ENCODE measurements at regions of chr1 and their contacts with region 1.

Region 1: DNA sequence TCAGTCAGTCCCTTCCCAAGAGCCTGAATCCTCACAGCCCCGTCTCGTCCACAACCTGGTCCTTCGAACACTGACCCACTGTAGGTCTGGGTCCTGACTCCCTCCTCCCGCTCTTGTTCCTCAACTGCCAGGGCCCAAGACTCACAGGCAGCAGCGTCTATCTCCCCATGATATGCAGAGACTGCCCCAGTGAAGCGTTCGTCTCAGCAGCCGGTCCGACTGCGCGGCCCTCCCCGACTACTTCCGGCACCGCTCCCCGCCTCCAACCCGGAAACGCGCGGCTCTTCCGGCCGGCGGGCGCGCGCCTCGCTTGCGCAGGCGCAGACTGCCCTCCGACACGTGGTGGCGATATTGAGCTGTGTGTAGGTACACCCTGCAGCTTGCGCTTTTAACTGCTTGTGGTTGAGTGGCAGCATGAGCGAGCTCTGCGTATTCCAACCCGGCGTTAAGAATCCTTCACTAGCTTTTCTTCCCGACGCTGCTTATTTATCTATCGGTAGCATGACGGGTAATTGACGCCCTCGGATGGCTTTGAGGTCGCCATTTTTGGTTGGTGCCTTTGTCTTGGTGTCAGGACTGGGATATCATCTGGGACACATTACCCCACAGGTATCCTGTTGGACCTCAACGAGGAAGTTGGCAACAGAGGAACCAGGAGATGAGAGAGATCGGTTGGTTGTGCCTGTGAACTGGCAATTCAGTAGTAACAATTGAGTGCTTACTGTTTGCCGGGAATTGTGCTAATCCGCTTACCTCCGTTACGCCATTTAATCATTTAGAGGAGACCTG is at the start of gene TAF12:
- DNase-seq: peak; percentile 80 to 92 (median 86)
- H3K4me3 ChIP-seq: peak within 1 kb of the TSS; percentile 57 to 98 (median 84)
- H3K27ac ChIP-seq: peak within 1 kb of the TSS; percentile 52 to 95 (median 90)
- H3K27me3 ChIP-seq: no peaks in the 10 kb centered on the region
- CTCF ChIP-seq: peak in 55 of 56 donors; percentile 29 to 87 (median 62)
- total RNA-seq, gene TAF12: 10.2 to 23.1 (median 15.5) TPM

Region 2: DNA sequence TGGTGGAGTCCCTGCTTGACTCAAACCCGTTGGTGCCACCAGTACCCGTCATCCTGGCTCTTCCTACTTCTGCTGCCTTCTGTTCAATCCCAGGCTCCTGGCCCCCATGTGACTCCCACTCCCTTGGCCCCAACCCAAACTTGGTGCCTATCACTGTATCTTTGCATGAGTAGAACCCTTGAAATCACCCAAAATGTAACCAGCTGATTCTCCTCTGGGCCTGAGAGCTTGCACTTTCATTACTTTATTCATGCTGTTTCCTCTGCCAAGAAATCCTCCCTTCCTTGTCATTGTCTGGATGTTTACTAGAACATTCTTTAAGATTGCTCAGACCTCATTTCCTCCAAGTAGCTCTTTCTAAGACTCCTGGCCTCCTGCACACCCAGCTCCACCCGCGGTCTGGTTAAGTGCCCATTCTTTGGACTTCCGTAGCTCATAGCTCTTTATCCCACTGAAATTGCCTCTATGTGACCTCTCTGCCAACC is 482.2 kb before region 1 on chr1:
- intact Hi-C with region 1: no loop called
- DNase-seq: no peak
- H3K4me3 ChIP-seq: no peak overlapping the region
- H3K27ac ChIP-seq: peak overlapping the region in 31 of 59 donors; percentile 0 to 91 (median 37)
- H3K27me3 ChIP-seq: no peaks in the 10 kb centered on the region
- CTCF ChIP-seq: no peak

Region 3: DNA sequence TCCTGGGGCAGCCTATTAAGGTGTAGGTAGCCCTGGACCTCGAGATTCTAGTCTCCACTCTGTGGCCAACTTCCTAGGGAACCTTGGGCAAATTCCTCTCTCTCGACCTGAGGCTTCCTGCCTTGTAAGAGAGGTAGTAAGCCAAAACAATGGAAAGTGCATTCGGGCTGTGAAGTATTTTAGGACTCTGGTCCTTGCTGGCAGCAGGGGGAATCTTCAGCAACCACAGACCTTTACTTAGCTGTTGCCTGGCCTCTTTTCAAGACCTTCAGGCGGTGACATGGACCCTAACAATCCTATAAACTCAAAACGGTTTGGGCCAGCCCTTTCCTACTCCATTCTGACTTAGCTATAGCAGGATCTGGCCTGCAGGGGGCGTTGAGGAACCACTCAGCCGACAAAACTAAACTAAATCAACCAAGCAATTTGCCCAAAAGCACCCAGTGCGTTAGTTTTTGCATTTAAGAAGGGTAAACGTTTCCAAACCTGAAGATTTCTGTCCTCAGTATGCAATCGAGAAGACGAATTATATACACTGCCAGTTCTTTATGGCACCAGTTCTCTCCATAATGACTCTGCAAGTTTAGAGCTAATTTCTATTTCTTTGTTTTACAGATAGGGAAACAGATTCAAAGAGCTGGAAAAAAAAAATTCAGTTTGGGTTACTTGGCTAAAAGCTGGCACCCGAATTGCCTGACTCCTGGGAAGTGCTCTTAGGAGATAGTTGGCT is 394.6 kb before region 1 on chr1:
- intact Hi-C with region 1: loop called in 1 of 2 experiments (anchors 10 kb)
- DNase-seq: peak; percentile 69 to 89 (median 78)
- H3K4me3 ChIP-seq: peak overlapping the region in 51 of 59 donors; percentile 7 to 82 (median 33)
- H3K27ac ChIP-seq: peak overlapping the region; percentile 6 to 96 (median 85)
- H3K27me3 ChIP-seq: no peaks in the 10 kb centered on the region
- CTCF ChIP-seq: peak; percentile 83 to 97 (median 94)

Region 4: GRCh38 chr1:28581536-28582247 is 61.3 kb before region 1 on chr1:
- intact Hi-C with region 1: loop called in 1 of 2 experiments (anchors 5 kb)
- DNase-seq: peak; percentile 94 to 98 (median 97)
- H3K4me3 ChIP-seq: peak overlapping the region; percentile 71 to 100 (median 94)
- H3K27ac ChIP-seq: peak overlapping the region; percentile 14 to 97 (median 86)
- H3K27me3 ChIP-seq: no peaks in the 10 kb centered on the region
- CTCF ChIP-seq: peak in 45 of 56 donors; percentile 8 to 63 (median 38)

Region 5: DNA sequence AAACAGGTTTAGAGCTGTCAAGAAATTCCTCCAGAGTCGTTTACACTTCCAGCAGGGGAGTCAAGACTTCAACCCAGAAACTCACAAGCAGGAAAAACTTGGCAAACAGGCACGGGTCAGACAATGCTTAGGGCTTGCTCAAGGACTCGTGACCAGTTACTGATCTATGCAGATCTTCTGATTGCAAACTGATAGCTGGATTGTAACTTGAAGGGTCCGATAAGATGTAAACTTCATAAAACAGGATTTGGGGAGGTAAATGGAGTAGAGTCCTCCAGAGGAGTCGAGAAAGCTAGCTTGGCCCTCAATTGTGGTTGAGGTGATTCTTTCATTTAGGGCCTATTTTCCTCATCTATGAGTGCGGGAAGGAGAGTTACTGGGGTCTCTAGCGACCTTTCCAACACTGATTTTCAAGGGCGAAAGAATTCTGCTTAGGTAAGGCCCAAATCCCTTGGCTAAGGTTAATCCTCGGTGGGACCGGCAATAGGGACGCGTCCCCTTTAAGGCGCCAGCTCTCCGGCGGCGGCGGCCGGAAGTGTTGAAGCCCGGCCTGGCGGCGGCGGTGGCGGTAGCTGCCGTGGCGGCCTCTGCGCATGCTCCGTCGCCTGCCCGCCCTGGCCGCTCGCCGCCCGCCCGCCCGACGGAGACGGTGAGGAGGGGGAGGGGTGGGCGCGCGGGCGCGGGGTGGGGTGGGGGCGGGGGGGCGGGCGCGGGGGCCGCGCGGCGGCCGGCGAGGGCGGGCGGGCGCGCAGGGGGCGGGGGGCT is 25.3 kb after region 1 on chr1 and contains the start of gene GMEB1:
- intact Hi-C with region 1: loop called (anchors 1 kb)
- DNase-seq: peak; percentile 68 to 89 (median 77)
- H3K4me3 ChIP-seq: peak within 1 kb of the TSS; percentile 67 to 100 (median 93)
- H3K27ac ChIP-seq: peak within 1 kb of the TSS; percentile 92 to 100 (median 98)
- H3K27me3 ChIP-seq: no peaks in the 10 kb centered on the region
- CTCF ChIP-seq: peak in 22 of 56 donors; percentile 6 to 45 (median 24)
- total RNA-seq, gene GMEB1: 7.1 to 15.1 (median 10.6) TPM

Region 6: GRCh38 chr1:28860332-28861073 is 217.5 kb after region 1 on chr1:
- intact Hi-C with region 1: no loop called
- DNase-seq: peak in 1 of 10 donors; percentile 54
- H3K4me3 ChIP-seq: no peak overlapping the region
- H3K27ac ChIP-seq: peak overlapping the region in 1 of 59 donors; percentile 19
- H3K27me3 ChIP-seq: no peaks in the 10 kb centered on the region
- CTCF ChIP-seq: no peak